ENCODE measurements at regions of chr9 and their contacts with region 1.

Region 1: DNA sequence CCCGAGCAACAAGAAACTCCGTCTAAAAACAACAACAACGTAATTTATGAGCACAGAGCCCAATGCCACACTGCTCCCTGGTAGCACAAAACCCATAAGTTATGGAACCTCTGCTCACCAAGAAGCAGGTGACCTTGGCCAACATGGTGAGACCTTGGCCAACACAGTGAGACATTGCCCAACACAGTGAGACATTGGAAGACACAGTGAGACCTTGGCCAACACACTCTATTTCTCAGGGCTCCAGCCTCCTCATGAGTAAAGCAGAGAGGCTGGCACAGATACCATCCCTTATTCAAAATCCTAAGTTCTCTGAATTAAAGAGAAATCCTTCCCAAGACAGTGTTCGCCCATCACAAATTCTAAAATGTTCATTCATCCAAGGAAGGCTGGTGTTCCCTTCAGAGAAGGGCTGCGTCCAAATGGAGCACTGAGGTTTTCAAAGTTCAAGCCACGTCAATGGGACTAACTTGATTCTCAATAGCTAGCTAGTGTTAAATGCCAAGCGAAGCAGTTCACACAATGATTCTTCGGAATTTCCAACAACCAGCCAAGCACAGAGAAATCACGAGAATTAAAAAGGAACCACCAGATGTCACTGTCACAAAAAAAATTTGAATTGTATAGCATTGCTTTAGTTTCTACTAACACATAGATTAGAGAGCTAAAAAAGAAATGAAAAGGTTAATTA is 29.5 kb downstream of the TTC39B start:
- DNase-seq: no peak
- ATAC-seq: peak; percentile 76
- H3K4me3 Mint-ChIP-seq: no peak overlapping the region
- H3K27ac Mint-ChIP-seq: peak overlapping the region; percentile 29
- H3K4me1 Mint-ChIP-seq: peaks cover 33% of the 10 kb centered on the region
- H3K27me3 Mint-ChIP-seq: no peaks in the 10 kb centered on the region

Region 2: GRCh38 chr9:15306757-15307534 is 29.4 kb after region 1 on chr9 and contains the start of gene TTC39B:
- CTCF ChIA-PET with region 1: interaction called, 9 read pairs
- POLR2A ChIA-PET with region 1: no interaction called
- intact Hi-C with region 1: loop called (anchors 1 to 2 kb)
- DNase-seq: peak; percentile 90
- ATAC-seq: peak; percentile 83
- H3K4me3 Mint-ChIP-seq: peak within 1 kb of the TSS; percentile 98
- H3K27ac Mint-ChIP-seq: peak within 1 kb of the TSS; percentile 98
- H3K4me1 Mint-ChIP-seq: peaks cover 59% of the 10 kb centered on the region
- H3K27me3 Mint-ChIP-seq: no peaks in the 10 kb centered on the region
- total RNA-seq, gene TTC39B: 26.4 to 34.4 TPM

Region 3: DNA sequence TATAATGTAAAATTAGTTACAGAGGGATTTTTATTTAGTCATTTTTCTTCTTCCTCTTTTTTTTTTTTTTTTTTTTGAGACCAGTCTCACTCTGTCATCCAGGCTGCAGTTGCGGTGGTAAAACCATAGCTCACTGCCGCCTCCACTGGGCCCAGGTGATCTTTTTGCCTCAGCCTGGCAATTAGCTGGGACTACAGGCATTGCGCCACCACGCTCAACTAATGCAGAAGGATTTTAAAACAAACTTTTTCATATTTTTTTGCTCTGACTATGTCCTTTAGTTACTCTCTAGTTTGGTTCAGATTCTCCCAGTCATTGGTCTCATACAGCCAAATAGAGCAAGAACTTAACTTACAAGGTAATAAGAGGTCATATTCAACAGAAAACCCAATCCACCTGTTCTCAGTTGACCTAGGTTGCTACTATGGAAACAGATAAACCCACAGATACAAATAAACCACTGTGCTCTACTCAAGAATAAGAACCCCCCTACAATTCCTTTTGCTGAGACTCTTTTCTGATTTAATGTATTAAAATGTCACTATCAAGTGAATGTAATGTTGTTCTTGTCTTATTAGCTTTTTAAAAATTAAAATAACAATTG is 79.6 kb after region 1 on chr9:
- CTCF ChIA-PET with region 1: interaction called, 4 read pairs
- POLR2A ChIA-PET with region 1: no interaction called
- intact Hi-C with region 1: loop called (anchors 2 to 5 kb)
- DNase-seq: peak; percentile 68
- ATAC-seq: peak; percentile 88
- H3K4me3 Mint-ChIP-seq: no peak overlapping the region
- H3K27ac Mint-ChIP-seq: no peak overlapping the region
- H3K4me1 Mint-ChIP-seq: peaks cover 12% of the 10 kb centered on the region
- H3K27me3 Mint-ChIP-seq: no peaks in the 10 kb centered on the region

Region 4: DNA sequence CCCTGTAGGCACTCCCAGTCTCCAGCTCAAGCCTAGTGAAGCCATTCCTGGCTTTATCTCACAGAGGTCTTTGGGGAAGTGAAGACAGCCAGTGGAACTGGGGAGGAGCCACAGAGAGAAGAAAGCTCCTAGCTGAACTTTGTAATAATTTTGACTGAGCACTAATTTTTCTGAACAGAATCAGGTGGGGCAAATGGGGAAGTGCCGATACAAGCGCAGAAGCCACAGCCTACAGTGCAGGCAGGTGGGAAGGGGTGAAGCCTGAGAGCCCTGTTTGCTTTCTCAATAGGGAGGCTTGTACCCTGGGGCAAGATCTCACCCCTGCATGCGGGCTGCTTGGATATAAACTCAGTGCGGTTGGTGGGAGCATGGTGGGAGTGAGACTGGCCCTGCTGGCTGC is 96.8 kb after region 1 on chr9:
- CTCF ChIA-PET with region 1: no interaction called
- POLR2A ChIA-PET with region 1: no interaction called
- intact Hi-C with region 1: no loop called
- DNase-seq: no peak
- ATAC-seq: no peak
- H3K4me3 Mint-ChIP-seq: no peak overlapping the region
- H3K27ac Mint-ChIP-seq: no peak overlapping the region
- H3K4me1 Mint-ChIP-seq: no peaks in the 10 kb centered on the region
- H3K27me3 Mint-ChIP-seq: no peaks in the 10 kb centered on the region

Region 5: GRCh38 chr9:15416880-15417279 is 139.3 kb after region 1 on chr9:
- CTCF ChIA-PET with region 1: interaction called, 4 read pairs
- POLR2A ChIA-PET with region 1: no interaction called
- intact Hi-C with region 1: loop called (anchors 1 to 2 kb)
- DNase-seq: peak; percentile 61
- ATAC-seq: no peak
- H3K4me3 Mint-ChIP-seq: no peak overlapping the region
- H3K27ac Mint-ChIP-seq: no peak overlapping the region
- H3K4me1 Mint-ChIP-seq: peaks cover 1% of the 10 kb centered on the region
- H3K27me3 Mint-ChIP-seq: no peaks in the 10 kb centered on the region

Region 6: DNA sequence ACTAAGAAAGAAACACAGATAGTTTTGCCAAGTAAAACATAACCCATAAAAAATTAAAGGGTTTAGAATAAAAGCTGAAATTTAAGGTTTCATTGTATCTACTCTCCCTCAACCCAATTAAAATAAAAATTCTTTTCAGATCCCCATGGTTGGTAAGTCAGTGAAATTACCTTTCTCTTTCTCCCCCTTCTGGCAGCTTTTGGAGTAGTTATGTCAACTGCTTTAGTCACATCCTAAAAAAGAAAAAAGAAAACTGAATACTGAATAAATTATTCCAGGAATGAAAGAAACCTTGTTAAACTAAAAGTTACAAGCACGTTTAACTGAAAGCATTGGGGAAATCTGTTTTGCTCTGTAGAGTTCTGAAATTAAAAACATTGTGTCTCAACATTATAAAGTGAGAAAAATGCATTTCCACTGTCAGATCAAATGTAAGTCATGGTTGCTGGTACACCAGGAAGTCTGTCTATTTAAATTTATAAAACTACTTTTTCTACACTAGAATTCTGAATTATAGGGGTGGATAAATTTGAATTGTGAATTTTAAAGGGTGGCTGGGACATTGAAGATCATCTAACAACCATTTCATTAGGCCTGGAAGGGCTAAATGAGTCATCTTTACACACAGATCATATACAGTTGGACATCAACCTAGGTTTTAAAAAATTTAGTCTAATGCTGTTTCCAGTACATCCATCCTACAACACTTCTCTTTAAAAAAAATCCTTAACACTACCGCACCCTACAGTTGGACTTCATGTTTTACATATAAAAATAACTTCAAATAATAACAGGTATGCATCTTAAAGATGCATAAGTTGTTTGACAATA is 208.5 kb after region 1 on chr9:
- CTCF ChIA-PET with region 1: interaction called, 3 read pairs
- POLR2A ChIA-PET with region 1: no interaction called
- intact Hi-C with region 1: loop called in 1 of 2 experiments (anchors 5 kb)
- DNase-seq: no peak
- ATAC-seq: peak; percentile 61
- H3K4me3 Mint-ChIP-seq: no peak overlapping the region
- H3K27ac Mint-ChIP-seq: peak overlapping the region; percentile 72
- H3K4me1 Mint-ChIP-seq: peaks cover 41% of the 10 kb centered on the region
- H3K27me3 Mint-ChIP-seq: no peaks in the 10 kb centered on the region

Region 7: GRCh38 chr9:15499139-15499538 is 221.6 kb after region 1 on chr9:
- CTCF ChIA-PET with region 1: no interaction called
- POLR2A ChIA-PET with region 1: no interaction called
- intact Hi-C with region 1: no loop called
- DNase-seq: no peak
- ATAC-seq: no peak
- H3K4me3 Mint-ChIP-seq: no peak overlapping the region
- H3K27ac Mint-ChIP-seq: peak overlapping the region; percentile 65
- H3K4me1 Mint-ChIP-seq: peaks cover 72% of the 10 kb centered on the region
- H3K27me3 Mint-ChIP-seq: no peaks in the 10 kb centered on the region

Region 8: GRCh38 chr9:15529566-15530324 is 252.2 kb after region 1 on chr9:
- CTCF ChIA-PET with region 1: no interaction called
- POLR2A ChIA-PET with region 1: no interaction called
- intact Hi-C with region 1: no loop called
- DNase-seq: no peak
- ATAC-seq: no peak
- H3K4me3 Mint-ChIP-seq: no peak overlapping the region
- H3K27ac Mint-ChIP-seq: peak overlapping the region; percentile 19
- H3K4me1 Mint-ChIP-seq: peaks cover 16% of the 10 kb centered on the region
- H3K27me3 Mint-ChIP-seq: peaks cover under 1% of the 10 kb centered on the region

Region 9: GRCh38 chr9:15882328-15882727 is 604.8 kb after region 1 on chr9:
- CTCF ChIA-PET with region 1: no interaction called
- POLR2A ChIA-PET with region 1: no interaction called
- intact Hi-C with region 1: no loop called
- DNase-seq: no peak
- ATAC-seq: no peak
- H3K4me3 Mint-ChIP-seq: no peak overlapping the region
- H3K27ac Mint-ChIP-seq: no peak overlapping the region
- H3K4me1 Mint-ChIP-seq: no peaks in the 10 kb centered on the region
- H3K27me3 Mint-ChIP-seq: no peaks in the 10 kb centered on the region

Measured in activated CD4-positive, alpha-beta T cell treated with anti-CD3 and anti-CD28 coated beads for 36 hours (primary cell).